Right cardiac atrium (tissue), 5 donors: ENCODE measurements at regions of chr5 and their contacts with region 1.

Region 1: GRCh38 chr5:136089791-136090190 is 42.9 kb upstream of the SMAD5 start:
- DNase-seq: peak in 1 of 3 donors; percentile 28
- ATAC-seq: peak in 1 of 2 donors; percentile 51
- H3K4me3 ChIP-seq: no peak overlapping the region
- H3K27ac ChIP-seq: no peak overlapping the region
- H3K4me1 ChIP-seq: peaks cover 5% of the 10 kb centered on the region
- H3K27me3 ChIP-seq: no peaks in the 10 kb centered on the region

Region 2: GRCh38 chr5:136132557-136133221 is 42.9 kb after region 1 on chr5 and contains the start of gene SMAD5:
- intact Hi-C with region 1: loop called in 1 of 4 experiments (anchors 5 kb)
- DNase-seq: peak; percentile 97 to 99 (median 98)
- ATAC-seq: peak; percentile 99
- H3K4me3 ChIP-seq: peak within 1 kb of the TSS; percentile 87
- H3K27ac ChIP-seq: peak within 1 kb of the TSS; percentile 95
- H3K4me1 ChIP-seq: peaks cover 2% of the 10 kb centered on the region
- H3K27me3 ChIP-seq: no peaks in the 10 kb centered on the region
- total RNA-seq, gene SMAD5: 43.9 to 62.9 (median 58.2) TPM